ENCODE measurements at regions of chr19 and their contacts with region 1.

Region 1: DNA sequence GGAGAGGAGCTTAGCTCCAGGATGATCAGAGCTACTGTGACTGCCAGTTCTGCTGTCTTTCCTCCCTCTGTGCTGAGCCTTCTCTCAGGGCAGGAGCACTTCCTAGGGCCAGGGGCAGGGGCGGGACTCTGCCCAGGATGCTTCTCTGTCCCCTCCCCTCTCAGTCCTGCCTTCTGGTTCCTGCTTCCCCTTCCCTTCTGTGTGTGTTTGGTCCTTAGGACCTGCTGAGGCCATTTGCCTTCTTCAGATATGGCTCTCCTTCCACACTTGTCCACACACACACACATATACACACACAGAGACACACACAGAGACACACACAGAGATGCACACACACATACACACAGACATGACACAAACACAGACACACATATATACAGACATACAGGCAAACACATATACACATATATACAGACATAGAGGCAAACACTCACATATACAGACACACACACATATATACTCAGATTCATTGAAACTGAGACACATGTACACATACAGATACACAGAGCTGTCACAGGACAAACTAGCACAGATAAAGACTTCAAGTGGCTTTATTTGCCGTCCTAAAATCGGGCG is 22.0 kb upstream of the CD177 start:
- DNase-seq: no peak

Region 2: DNA sequence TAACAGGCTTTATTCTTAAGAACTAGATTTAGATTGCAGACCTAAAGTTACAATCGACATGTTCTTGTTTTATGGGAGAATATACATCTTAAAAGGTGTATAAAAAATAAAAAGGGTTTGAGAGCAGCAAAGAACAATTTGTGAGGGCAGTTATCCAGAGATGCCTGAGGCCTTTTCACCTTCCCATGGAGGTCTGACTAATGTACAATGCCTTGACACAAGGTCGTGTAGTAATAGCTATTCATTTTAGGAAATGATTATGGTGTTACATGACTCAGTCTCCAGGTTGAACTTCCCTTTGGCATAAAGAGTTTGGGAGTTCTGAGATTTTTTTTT is 1556.2 kb before region 1 on chr19:
- intact Hi-C with region 1: no loop called
- DNase-seq: no peak

Region 3: GRCh38 chr19:43380771-43381386 is 49.4 kb after region 1 on chr19:
- intact Hi-C with region 1: loop called in 1 of 2 experiments (anchors 5 kb)
- DNase-seq: no peak

Region 4: GRCh38 chr19:43545981-43546380 is 214.5 kb after region 1 on chr19:
- intact Hi-C with region 1: no loop called
- DNase-seq: no peak